Adrenal gland (tissue), 19 donors: ENCODE measurements at regions of chr1 and their contacts with region 1.

Region 1: GRCh38 chr1:203038891-203039608 is 12.8 kb downstream of the PPFIA4 start:
- DNase-seq: peak; percentile 66 to 90 (median 77)
- H3K4me3 ChIP-seq: no peak overlapping the region
- H3K27ac ChIP-seq: no peak overlapping the region
- H3K4me1 ChIP-seq: no peaks in the 10 kb centered on the region
- H3K27me3 ChIP-seq: peaks cover 6% of the 10 kb centered on the region
- CTCF ChIP-seq: peak; percentile 76 to 95 (median 90)
- POLR2A ChIP-seq: no peak

Region 2: DNA sequence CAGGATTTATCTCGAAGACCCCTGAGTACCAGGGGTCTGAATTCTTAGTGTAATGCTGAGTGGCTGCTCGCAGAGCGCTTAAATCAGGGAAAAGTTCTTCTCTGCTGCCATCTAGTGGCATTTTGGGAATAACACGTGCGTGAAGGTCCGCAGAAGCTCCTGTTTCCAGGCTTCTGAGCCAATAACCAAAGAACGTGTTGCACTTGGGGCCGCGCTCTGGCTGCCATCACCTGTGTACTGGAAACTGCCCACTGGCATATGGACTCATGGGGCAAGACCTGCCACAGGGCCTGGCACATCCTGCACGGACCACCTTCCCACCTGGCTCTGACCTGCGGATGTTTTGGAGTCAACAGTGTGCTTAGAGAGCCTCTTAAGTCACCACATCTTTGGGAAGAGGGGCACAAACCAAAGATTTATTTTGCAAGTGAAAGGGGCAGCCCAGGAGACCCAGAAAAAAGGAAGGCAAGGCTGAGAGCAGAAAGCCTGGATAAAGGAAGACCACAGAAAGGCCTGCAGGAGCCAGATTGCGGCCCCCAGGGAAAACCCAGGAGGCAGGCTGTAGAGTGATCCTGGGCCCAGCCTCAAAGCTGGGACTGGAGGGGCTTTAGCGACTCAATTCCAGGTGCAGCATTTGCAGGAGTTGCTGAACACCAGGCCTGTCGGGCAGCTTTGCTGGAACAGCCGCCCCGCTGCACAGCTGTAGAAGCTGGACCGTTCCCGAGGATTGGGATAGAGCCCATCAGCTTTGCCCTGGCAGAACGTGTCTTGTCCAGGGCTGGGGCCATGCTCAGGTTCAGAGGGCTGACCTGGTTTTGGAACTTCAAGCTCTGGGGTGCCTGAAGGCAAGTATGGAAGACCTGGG is 177.5 kb after region 1 on chr1:
- intact Hi-C with region 1: loop called (anchors 2 to 5 kb)
- DNase-seq: peak; percentile 30 to 78 (median 66)
- H3K4me3 ChIP-seq: no peak overlapping the region
- H3K27ac ChIP-seq: no peak overlapping the region
- H3K4me1 ChIP-seq: no peaks in the 10 kb centered on the region
- H3K27me3 ChIP-seq: peaks cover 6% of the 10 kb centered on the region
- CTCF ChIP-seq: peak; percentile 62 to 82 (median 75)
- POLR2A ChIP-seq: no peak